Posterior cingulate gyrus (tissue), 11 donors: ENCODE measurements at regions of chrX and their contacts with region 1.

Region 1: GRCh38 chrX:109709129-109709631 is 23.9 kb downstream of the ACSL4 start:
- DNase-seq: no peak

Region 2: GRCh38 chrX:109890895-109891502 is 181.8 kb after region 1 on chrX:
- intact Hi-C with region 1: loop called (anchors 2 kb)
- DNase-seq: peak in 7 of 10 donors; percentile 29 to 88 (median 42)